ENCODE measurements at regions of chrX and their contacts with region 1.

Region 1: DNA sequence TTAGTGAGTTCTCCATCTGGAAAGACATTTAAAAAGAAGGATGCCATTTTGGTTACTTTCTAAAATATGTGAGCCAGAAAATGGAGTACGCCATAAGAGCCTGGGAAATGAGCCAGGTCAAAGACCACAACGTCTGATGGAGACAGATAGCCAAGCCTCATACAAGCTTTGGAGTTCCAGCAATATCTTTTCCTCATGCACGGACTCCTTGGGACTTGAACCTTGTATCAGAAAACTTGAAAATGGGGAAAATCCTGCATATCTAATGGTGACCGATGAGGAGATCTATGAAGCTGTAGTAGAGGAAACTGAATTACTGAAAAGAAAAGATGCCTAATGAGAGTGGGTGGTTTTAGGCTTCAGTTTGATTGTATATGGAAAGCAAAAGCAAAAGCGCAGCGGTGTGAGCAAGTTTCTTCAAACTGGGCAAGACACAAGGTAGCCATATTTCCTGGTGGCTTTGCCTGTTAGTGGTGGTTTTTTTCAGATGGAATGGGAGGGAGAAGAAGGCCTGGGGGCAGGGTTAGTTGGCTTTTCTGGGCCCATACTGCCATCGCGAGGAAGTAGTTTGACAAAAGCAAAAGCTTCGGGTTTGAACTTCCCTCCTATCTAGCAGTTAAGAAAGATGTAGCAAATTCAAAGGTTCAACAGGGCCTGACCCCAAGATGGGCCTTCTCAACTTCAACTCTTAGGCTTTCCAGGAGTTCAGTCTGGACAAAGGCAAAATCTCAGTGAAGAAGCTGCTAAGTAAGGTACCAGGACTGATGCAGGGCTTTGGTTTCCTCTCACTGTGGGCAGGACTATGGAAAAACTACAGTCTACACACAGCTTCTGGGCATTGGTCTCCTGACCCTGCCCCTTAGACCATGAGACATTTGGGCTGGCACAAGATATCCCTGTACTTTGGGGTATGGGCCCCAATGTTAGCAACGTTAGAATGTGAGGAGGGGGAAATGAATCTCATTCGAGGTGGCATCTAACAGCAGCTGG is 210.0 kb upstream of the STK26 start:
- DNase-seq: peak; percentile 79
- H3K4me3 Mint-ChIP-seq: peak overlapping the region; percentile 72
- H3K27ac Mint-ChIP-seq: peak overlapping the region; percentile 91
- H3K4me1 Mint-ChIP-seq: peaks cover 30% of the 10 kb centered on the region
- H3K27me3 Mint-ChIP-seq: no peaks in the 10 kb centered on the region

Region 2: DNA sequence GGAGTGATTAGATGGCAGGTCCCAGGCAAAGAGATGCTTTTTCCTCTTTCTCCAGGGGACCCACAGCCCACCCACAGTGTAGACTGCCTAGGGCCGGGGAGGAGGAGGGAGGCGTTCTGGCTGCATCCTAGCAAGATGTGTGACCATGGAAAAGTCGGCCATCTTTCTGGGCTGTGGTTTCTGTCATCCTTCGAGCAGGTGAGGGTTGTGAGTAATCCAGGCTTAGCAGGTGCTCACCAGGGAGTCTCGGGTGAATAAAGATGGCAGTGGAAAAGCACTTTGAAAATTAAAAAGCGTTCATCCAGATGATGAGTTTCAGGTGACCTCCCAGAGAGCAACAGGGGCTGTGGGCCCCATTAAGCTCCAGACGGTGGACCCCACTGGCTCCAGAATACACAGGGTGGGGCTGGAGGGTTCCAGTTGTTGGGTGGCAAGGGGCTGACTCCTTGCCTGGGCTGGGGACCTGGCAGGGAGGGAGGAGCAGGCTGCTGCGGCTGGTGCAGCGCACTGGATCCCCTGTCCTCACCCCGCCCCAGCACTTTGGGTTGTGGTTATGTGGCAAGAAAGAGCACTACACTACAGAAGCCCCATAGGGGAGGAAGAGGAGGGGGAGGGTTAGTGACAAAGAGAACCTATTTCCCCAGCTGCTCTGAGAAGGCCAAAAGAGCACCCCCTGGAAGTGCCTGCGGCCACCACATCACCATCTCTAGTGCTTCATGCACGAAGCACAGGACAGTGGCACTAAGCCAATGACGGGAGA is 1726.5 kb before region 1 on chrX:
- CTCF ChIA-PET with region 1: no interaction called
- POLR2A ChIA-PET with region 1: no interaction called
- intact Hi-C with region 1: loop called (anchors 5 kb)
- DNase-seq: peak; percentile 82
- H3K4me3 Mint-ChIP-seq: peak overlapping the region; percentile 51
- H3K27ac Mint-ChIP-seq: peak overlapping the region; percentile 90
- H3K4me1 Mint-ChIP-seq: peaks cover 69% of the 10 kb centered on the region
- H3K27me3 Mint-ChIP-seq: no peaks in the 10 kb centered on the region

Region 3: DNA sequence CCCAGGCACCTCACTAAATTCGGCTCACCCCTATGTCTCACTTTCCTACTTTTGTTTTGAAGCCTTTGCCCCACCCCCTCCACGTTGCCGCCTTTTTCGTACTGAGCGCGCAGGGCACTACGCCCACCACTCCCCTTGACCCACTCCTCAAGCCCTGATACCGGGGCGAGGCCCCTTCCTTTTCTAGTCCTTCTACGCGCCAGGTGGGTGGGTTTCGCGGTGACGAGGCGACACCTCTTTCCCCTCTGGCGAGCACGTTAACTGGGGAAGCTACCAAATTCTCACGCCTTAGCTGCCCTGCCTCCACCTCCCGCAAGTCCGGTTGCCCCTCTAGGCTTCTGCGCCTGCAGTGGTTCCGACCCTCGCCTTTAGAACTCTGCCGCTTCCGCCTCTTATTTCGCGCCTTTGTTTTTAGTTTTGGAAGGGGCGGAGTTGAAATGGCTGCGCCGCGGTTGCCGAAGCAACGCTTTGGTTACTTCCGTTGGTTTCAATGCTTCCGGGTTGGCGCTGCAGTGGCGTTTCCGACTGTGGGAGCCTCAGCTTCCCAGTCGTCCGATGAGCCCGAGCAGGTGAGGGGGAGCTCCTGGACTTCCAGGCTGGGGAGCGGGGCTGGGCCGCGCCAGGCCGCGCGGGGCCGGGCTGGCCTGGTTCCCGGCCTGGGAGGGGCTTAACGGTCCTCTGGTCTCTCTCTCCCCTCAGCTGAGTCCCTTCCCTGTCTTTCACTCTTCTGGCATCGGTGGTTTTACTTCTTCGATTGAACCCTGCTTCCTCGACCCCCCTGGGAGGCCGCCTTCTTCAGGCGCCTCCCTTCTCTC is 1473.5 kb before region 1 on chrX and contains the start of gene SLC25A14:
- CTCF ChIA-PET with region 1: no interaction called
- POLR2A ChIA-PET with region 1: no interaction called
- intact Hi-C with region 1: loop called (anchors 10 kb)
- DNase-seq: peak; percentile 82
- H3K4me3 Mint-ChIP-seq: peak within 1 kb of the TSS; percentile 87
- H3K27ac Mint-ChIP-seq: peak within 1 kb of the TSS; percentile 88
- H3K4me1 Mint-ChIP-seq: peaks cover 10% of the 10 kb centered on the region
- H3K27me3 Mint-ChIP-seq: no peaks in the 10 kb centered on the region
- total RNA-seq, gene SLC25A14: 12.1 to 13.2 TPM

Region 4: DNA sequence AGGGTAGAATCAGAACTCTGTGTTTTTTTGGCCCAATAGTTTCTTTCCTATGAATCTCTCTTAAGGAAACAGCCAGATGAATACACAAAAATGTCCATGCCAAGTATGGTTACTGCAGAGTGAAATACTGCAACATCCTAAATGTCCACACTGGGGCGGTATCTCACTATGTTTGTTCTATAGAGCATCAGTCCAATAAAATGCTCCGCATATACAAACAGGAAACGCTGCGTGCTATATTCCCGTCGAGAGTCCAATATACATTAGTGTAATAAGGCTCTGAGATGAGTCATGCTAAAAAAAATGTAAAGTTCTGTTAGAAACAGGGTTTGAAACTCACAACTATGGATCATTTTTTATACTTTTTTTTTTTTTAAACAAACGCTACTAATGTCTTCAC is 837.2 kb before region 1 on chrX:
- CTCF ChIA-PET with region 1: no interaction called
- POLR2A ChIA-PET with region 1: no interaction called
- intact Hi-C with region 1: loop called (anchors 5 kb)
- DNase-seq: peak; percentile 27
- H3K4me3 Mint-ChIP-seq: no peak overlapping the region
- H3K27ac Mint-ChIP-seq: no peak overlapping the region
- H3K4me1 Mint-ChIP-seq: no peaks in the 10 kb centered on the region
- H3K27me3 Mint-ChIP-seq: no peaks in the 10 kb centered on the region

Region 5: DNA sequence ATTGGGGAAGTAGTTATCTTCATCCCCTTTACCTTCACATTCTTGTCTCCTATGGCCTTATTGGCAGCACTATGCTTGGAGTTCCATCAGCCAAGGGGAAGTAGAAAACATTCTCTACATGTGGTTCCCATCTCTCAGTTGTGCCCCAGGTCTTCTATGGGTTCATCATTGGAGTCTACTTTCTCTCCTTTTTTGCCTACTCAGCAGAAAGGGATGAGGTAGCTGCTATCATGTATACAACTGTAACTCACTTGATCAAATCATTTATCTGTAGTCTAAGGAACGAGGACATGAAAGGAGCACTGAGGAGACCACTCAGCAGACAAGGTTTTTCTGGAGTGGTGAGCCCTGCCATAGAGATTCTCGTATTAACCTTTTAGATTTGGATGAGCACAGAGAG is 388.2 kb before region 1 on chrX:
- CTCF ChIA-PET with region 1: no interaction called
- POLR2A ChIA-PET with region 1: no interaction called
- intact Hi-C with region 1: no loop called
- DNase-seq: no peak
- H3K4me3 Mint-ChIP-seq: no peak overlapping the region
- H3K27ac Mint-ChIP-seq: no peak overlapping the region
- H3K4me1 Mint-ChIP-seq: no peaks in the 10 kb centered on the region
- H3K27me3 Mint-ChIP-seq: no peaks in the 10 kb centered on the region

Region 6: DNA sequence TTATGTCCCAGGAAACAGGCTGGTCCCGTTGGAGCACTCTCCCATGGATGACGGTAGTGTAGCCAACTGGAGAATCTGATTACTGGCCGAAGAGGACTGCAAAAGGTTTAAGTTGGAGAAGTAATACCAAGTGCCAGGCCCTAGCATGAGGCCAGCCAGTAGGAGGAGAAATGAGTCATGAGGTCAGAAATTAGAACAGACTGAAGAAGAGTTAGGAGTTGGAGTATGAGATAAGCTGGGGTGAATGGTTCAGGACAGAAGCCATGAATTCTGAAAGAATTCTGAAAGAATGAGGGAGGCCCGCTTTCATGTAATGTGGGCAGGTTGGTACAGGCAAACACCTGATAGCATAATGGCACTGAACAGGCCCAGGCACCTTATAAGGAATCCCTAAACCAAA is 191.6 kb after region 1 on chrX:
- CTCF ChIA-PET with region 1: no interaction called
- POLR2A ChIA-PET with region 1: no interaction called
- intact Hi-C with region 1: no loop called
- DNase-seq: no peak
- H3K4me3 Mint-ChIP-seq: no peak overlapping the region
- H3K27ac Mint-ChIP-seq: no peak overlapping the region
- H3K4me1 Mint-ChIP-seq: peaks cover 26% of the 10 kb centered on the region
- H3K27me3 Mint-ChIP-seq: no peaks in the 10 kb centered on the region

Region 7: DNA sequence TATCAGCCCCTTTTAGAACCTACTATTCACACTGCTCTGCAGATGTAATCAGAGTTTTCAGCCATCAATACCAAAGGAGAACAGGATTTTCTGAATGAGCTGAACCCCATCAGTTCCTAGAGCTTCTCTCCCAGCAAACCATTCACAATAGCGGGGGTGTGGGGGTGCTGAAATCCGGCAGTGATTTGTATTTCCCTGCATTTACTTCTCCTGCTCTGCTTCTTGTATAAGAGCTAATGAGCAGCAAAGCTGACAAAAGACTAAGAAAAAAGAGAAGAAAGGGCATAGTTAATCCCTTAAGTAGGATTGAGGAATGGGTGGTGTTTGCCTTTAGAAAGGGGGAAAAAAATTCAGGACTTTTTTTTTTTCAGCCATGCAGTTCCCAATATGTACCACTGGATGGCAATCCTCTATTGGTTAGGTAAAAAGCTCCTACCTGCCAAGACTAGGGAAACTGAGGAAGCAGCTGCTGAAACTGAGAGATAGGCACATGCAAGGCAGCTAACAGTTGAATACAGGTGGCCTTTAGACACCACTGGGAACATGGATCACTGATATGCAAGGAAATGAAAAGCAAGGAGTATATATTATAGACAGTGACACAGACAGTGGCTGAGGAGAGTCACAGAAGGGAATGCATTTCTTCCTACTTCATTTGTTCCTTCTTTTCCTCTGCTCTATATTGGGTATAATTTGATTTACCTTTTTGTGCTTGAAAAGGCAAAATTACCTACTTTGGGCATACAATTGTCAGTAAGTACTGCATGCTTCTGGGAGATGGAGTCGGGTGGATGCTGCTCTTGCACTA is 927.4 kb after region 1 on chrX:
- CTCF ChIA-PET with region 1: no interaction called
- POLR2A ChIA-PET with region 1: no interaction called
- intact Hi-C with region 1: loop called (anchors 10 kb)
- DNase-seq: no peak
- H3K4me3 Mint-ChIP-seq: no peak overlapping the region
- H3K27ac Mint-ChIP-seq: no peak overlapping the region
- H3K4me1 Mint-ChIP-seq: peaks cover 24% of the 10 kb centered on the region
- H3K27me3 Mint-ChIP-seq: no peaks in the 10 kb centered on the region

Region 8: GRCh38 chrX:132776486-132777210 is 963.5 kb after region 1 on chrX:
- CTCF ChIA-PET with region 1: interaction called, 3 read pairs
- POLR2A ChIA-PET with region 1: no interaction called
- intact Hi-C with region 1: loop called (anchors 5 kb)
- DNase-seq: peak; percentile 8
- H3K4me3 Mint-ChIP-seq: no peak overlapping the region
- H3K27ac Mint-ChIP-seq: no peak overlapping the region
- H3K4me1 Mint-ChIP-seq: peaks cover 24% of the 10 kb centered on the region
- H3K27me3 Mint-ChIP-seq: no peaks in the 10 kb centered on the region